ENCODE measurements at regions of chr13 and their contacts with region 1.

Region 1: DNA sequence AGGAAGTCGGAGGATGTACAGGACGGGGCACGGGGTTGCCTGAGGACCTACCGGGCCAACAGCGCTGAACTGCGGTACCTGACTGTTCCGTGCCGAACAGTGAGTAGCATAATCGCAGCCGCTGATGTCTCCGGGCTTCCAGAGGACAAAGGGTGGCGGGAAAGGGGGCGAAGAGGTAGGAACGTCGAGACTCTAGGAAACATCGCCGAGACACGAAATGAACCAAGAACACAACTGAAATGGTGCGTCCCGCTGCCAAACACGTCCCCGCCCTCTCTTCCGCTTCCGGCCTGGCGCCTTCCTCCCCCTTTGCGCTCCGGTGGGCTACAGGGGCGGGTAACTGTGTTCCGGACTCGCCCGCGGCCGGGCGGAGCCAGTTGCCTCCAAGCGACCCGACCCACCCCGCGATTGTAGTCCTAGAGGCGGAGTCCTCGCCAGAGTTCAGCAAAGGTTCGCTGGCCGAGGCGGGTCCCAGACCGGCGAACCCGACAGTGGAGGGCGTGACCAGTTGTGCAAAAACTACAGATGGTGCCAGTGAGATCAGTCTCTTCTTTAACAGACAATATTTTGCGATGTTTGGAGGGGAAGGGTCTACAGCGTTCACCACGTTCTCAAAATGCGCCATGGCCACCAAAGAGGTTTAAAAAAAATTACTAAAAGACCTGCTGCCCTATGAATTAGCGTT is at the start of gene MRPS31:
- DNase-seq: peak; percentile 94
- H3K4me3 Mint-ChIP-seq: peak within 1 kb of the TSS; percentile 89
- H3K27ac Mint-ChIP-seq: peak within 1 kb of the TSS; percentile 90
- H3K4me1 Mint-ChIP-seq: peaks cover 36% of the 10 kb centered on the region
- H3K27me3 Mint-ChIP-seq: no peaks in the 10 kb centered on the region
- total RNA-seq, gene MRPS31: 42.9 and 43.1 TPM in 2 replicates

Region 2: GRCh38 chr13:39952249-39953233 is 818.5 kb before region 1 on chr13:
- intact Hi-C with region 1: loop called (anchors 10 kb)
- DNase-seq: no peak
- H3K4me3 Mint-ChIP-seq: no peak overlapping the region
- H3K27ac Mint-ChIP-seq: peak overlapping the region; percentile 6
- H3K4me1 Mint-ChIP-seq: peaks cover 42% of the 10 kb centered on the region
- H3K27me3 Mint-ChIP-seq: peaks cover 6% of the 10 kb centered on the region

Region 3: GRCh38 chr13:40789275-40790133 is 18.4 kb after region 1 on chr13 and contains the start of gene SLC25A15:
- intact Hi-C with region 1: loop called (anchors 2 kb)
- DNase-seq: peak; percentile 62
- H3K4me3 Mint-ChIP-seq: peak within 1 kb of the TSS; percentile 73
- H3K27ac Mint-ChIP-seq: peak within 1 kb of the TSS; percentile 76
- H3K4me1 Mint-ChIP-seq: peaks cover 36% of the 10 kb centered on the region
- H3K27me3 Mint-ChIP-seq: no peaks in the 10 kb centered on the region
- total RNA-seq, gene SLC25A15: 21.8 and 24.1 TPM in 2 replicates